CD4-positive, alpha-beta T cell (primary cell): ENCODE measurements at regions of chr5 and their contacts with region 1.

Region 1: GRCh38 chr5:133111299-133111698 is 59.5 kb downstream of the HSPA4 start:
- DNase-seq: peak; percentile 69 to 92 (median 76)
- ATAC-seq: peak; percentile 73
- H3K4me3 ChIP-seq: no peak overlapping the region
- H3K4me3 Mint-ChIP-seq: no peak overlapping the region
- H3K27ac ChIP-seq: no peak overlapping the region
- H3K27ac Mint-ChIP-seq: no peak overlapping the region
- H3K4me1 ChIP-seq: peaks cover 14% of the 10 kb centered on the region
- H3K4me1 Mint-ChIP-seq: peaks cover 23% of the 10 kb centered on the region
- H3K27me3 ChIP-seq: no peaks in the 10 kb centered on the region
- H3K27me3 Mint-ChIP-seq: no peaks in the 10 kb centered on the region
- CTCF ChIP-seq: peak; percentile 88

Region 2: GRCh38 chr5:132839426-132840301 is 271.6 kb before region 1 on chr5:
- CTCF ChIA-PET with region 1: no interaction called
- POLR2A ChIA-PET with region 1: no interaction called
- intact Hi-C with region 1: no loop called
- DNase-seq: no peak
- ATAC-seq: no peak
- H3K4me3 ChIP-seq: no peak overlapping the region
- H3K4me3 Mint-ChIP-seq: no peak overlapping the region
- H3K27ac ChIP-seq: no peak overlapping the region
- H3K27ac Mint-ChIP-seq: no peak overlapping the region
- H3K4me1 ChIP-seq: no peaks in the 10 kb centered on the region
- H3K4me1 Mint-ChIP-seq: no peaks in the 10 kb centered on the region
- H3K27me3 ChIP-seq: no peaks in the 10 kb centered on the region
- H3K27me3 Mint-ChIP-seq: no peaks in the 10 kb centered on the region
- CTCF ChIP-seq: no peak

Region 3: DNA sequence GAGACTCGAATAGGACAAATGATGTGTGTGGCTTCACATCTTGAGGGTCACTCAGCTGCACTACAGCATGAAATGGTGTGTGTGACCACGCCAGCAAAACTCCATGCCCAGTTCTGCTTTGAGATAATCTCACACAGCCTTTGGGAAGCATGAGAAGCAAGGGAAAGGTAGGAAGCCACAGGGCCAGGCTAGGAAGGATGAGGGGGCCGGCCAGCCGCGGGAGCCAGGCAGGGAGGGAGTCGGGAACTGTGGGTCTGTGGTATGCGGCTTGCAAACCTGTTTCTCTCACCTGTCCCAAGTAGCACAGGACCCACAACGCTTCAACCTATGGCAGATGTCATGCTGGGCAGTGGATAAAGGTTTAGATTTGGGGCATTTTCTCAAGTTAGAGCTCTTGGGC is 82.5 kb after region 1 on chr5:
- CTCF ChIA-PET with region 1: no interaction called
- POLR2A ChIA-PET with region 1: no interaction called
- intact Hi-C with region 1: loop called (anchors 2 to 5 kb)
- DNase-seq: no peak
- ATAC-seq: no peak
- H3K4me3 ChIP-seq: no peak overlapping the region
- H3K4me3 Mint-ChIP-seq: no peak overlapping the region
- H3K27ac ChIP-seq: no peak overlapping the region
- H3K27ac Mint-ChIP-seq: no peak overlapping the region
- H3K4me1 ChIP-seq: peaks cover 4% of the 10 kb centered on the region
- H3K4me1 Mint-ChIP-seq: no peaks in the 10 kb centered on the region
- H3K27me3 ChIP-seq: no peaks in the 10 kb centered on the region
- H3K27me3 Mint-ChIP-seq: no peaks in the 10 kb centered on the region
- CTCF ChIP-seq: no peak

Region 4: GRCh38 chr5:133287500-133287899 is 176.2 kb after region 1 on chr5:
- CTCF ChIA-PET with region 1: no interaction called
- POLR2A ChIA-PET with region 1: interaction called, 3 read pairs
- intact Hi-C with region 1: loop called in 1 of 2 experiments (anchors 1 kb)
- DNase-seq: peak; percentile 8 to 64 (median 39)
- ATAC-seq: peak; percentile 56
- H3K4me3 ChIP-seq: no peak overlapping the region
- H3K4me3 Mint-ChIP-seq: no peak overlapping the region
- H3K27ac ChIP-seq: no peak overlapping the region
- H3K27ac Mint-ChIP-seq: no peak overlapping the region
- H3K4me1 ChIP-seq: no peaks in the 10 kb centered on the region
- H3K4me1 Mint-ChIP-seq: no peaks in the 10 kb centered on the region
- H3K27me3 ChIP-seq: no peaks in the 10 kb centered on the region
- H3K27me3 Mint-ChIP-seq: no peaks in the 10 kb centered on the region
- CTCF ChIP-seq: peak; percentile 37

Region 5: DNA sequence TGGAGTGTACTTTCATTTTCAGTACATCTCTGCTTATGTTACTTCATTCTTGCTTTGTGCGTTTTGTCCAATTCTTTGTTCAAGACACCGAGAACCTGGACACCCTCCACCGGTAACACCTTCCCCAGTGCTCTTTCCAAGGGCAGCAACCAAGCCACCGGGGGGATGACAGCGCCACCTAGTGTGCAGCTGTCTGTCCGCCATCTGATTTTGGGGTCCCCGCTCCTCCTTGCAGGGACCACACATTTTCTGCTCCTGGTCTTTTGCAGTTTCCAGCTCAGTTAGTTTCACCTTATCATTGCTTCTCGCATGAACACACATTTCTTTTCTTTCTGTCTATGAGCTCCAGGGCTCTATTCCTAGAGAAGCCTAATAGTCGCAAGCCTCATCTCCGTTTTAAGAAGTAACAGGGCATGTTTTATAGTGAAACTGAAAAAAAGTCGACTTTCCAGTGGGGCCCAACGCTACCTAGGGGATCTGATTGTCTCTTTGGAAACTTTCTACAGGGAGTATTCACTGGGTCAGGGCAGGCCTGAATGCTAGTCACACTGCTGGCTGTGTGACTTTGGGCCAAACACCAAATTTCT is 349.0 kb after region 1 on chr5:
- CTCF ChIA-PET with region 1: no interaction called
- POLR2A ChIA-PET with region 1: no interaction called
- intact Hi-C with region 1: loop called (anchors 5 kb)
- DNase-seq: peak in 5 of 14 experiments; percentile 5 to 38 (median 28)
- ATAC-seq: no peak
- H3K4me3 ChIP-seq: no peak overlapping the region
- H3K4me3 Mint-ChIP-seq: no peak overlapping the region
- H3K27ac ChIP-seq: no peak overlapping the region
- H3K27ac Mint-ChIP-seq: no peak overlapping the region
- H3K4me1 ChIP-seq: peaks cover 14% of the 10 kb centered on the region
- H3K4me1 Mint-ChIP-seq: peaks cover 4% of the 10 kb centered on the region
- H3K27me3 ChIP-seq: no peaks in the 10 kb centered on the region
- H3K27me3 Mint-ChIP-seq: no peaks in the 10 kb centered on the region
- CTCF ChIP-seq: peak; percentile 16

Region 6: DNA sequence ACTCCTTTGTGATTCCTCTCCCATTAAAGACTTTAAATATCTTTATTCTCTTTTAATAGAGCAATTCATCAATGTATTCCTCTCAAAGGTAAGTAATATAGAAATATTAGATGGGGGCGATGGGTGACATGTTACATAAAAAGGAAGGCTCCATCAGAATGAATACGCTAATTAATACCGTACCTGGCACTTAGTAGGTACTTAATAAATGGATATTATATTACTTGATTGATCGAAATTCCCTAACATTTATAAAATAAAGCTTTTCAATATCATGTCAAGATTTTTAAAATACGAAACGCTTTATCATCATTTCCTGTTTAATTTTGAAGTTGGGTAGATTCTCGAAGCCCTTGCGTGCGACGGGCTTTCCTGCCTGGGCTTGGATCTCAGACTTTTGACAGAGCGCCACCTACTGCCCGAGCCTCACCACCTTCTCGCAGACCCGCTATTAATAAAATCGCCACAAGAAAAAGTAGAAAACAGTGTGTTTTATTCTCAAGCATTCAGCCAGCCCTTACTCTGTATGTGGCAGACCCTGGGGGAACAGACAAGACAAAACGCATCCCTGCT is 757.7 kb after region 1 on chr5:
- CTCF ChIA-PET with region 1: no interaction called
- POLR2A ChIA-PET with region 1: no interaction called
- intact Hi-C with region 1: loop called in 1 of 2 experiments (anchors 2 kb)
- DNase-seq: peak; percentile 44 to 83 (median 62)
- ATAC-seq: peak; percentile 78
- H3K4me3 ChIP-seq: no peak overlapping the region
- H3K4me3 Mint-ChIP-seq: no peak overlapping the region
- H3K27ac ChIP-seq: no peak overlapping the region
- H3K27ac Mint-ChIP-seq: no peak overlapping the region
- H3K4me1 ChIP-seq: no peaks in the 10 kb centered on the region
- H3K4me1 Mint-ChIP-seq: peaks cover 5% of the 10 kb centered on the region
- H3K27me3 ChIP-seq: peaks cover 0 to 7% of the 10 kb centered on the region in 2 experiments
- H3K27me3 Mint-ChIP-seq: peaks cover 27% of the 10 kb centered on the region
- CTCF ChIP-seq: peak; percentile 78